CD8-positive, alpha-beta T cell (primary cell): ENCODE measurements at regions of chr16 and their contacts with region 1.

Region 1: GRCh38 chr16:3364774-3365427 is 9.2 kb downstream of the OR2C1 start:
- DNase-seq: peak; percentile 67 to 95 (median 82)
- ATAC-seq: peak; percentile 91
- H3K4me3 ChIP-seq: peak overlapping the region; percentile 46 to 62
- H3K4me3 Mint-ChIP-seq: peak overlapping the region; percentile 81
- H3K27ac ChIP-seq: peak overlapping the region; percentile 72 to 91
- H3K27ac Mint-ChIP-seq: peak overlapping the region; percentile 91
- H3K4me1 ChIP-seq: peaks cover 9% of the 10 kb centered on the region
- H3K4me1 Mint-ChIP-seq: peaks cover 11% of the 10 kb centered on the region
- H3K27me3 ChIP-seq: peaks cover 0 to 10% of the 10 kb centered on the region in 2 experiments
- H3K27me3 Mint-ChIP-seq: peaks cover 24% of the 10 kb centered on the region
- CTCF ChIP-seq: no peak

Region 2: DNA sequence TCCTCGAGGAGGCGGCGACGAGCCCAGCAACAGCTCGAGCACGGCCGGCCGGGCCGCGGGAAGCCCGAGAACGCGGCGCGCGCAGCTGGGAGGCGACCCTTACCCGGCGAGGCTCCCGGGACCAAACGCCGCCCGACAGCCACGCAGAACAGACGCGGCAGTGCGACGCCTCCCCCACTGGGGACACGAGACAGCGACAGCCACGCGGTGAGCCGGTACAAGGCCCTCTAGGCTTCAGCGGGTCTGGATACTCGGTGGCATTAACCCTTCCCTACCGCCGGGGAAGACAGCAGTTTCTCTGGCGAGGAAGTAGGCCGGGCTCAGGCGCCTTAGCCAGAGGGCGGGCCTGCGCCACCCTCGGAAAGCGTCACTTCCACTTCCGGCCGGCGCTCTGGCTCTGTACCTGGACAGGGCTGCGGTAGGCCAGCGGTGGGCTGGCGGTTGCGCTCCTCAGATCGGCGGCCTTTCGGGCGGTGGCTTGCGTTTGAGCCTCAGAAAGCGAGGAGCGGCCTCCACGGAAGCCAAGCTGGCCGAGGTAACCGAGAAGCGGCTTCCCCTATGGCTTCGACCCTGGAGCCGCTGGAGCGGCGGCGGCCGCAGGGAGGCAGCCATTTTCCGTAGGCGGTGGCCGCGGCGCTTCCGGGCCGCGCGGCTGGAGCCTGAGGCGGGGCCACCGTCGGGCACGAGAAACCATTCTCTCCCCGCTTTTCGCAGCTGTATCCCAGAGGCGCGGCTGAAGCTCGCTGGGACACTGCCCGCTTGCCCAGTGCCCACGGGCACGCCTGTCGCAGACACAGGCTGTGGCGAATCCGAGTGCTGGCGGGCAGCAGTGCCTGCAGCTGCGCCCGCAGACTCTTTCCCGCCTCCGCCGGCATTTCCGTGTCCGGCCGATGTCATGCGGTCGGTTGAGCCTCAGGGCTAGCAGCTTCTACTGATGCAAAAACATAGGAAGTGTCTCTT is 59.5 kb before region 1 on chr16 and contains the starts of genes TIGD7 and ZNF75A:
- CTCF ChIA-PET with region 1: no interaction called
- POLR2A ChIA-PET with region 1: no interaction called
- intact Hi-C with region 1: loop called in 1 of 2 experiments (anchors 2 kb)
- DNase-seq: peak; percentile 60 to 94 (median 83)
- ATAC-seq: peak; percentile 97
- H3K4me3 ChIP-seq: peak within 1 kb of the TSS; percentile 90 to 93
- H3K4me3 Mint-ChIP-seq: peak within 1 kb of the TSS; percentile 83
- H3K27ac ChIP-seq: peak within 1 kb of the TSS; percentile 86 to 91
- H3K27ac Mint-ChIP-seq: peak within 1 kb of the TSS; percentile 90
- H3K4me1 ChIP-seq: peaks cover 14% of the 10 kb centered on the region
- H3K4me1 Mint-ChIP-seq: peaks cover 30% of the 10 kb centered on the region
- H3K27me3 ChIP-seq: no peaks in the 10 kb centered on the region
- H3K27me3 Mint-ChIP-seq: no peaks in the 10 kb centered on the region
- CTCF ChIP-seq: no peak
- total RNA-seq, gene TIGD7: 4.1 to 4.2 TPM
- total RNA-seq, gene ZNF75A: 59.6 to 61.3 TPM

Region 3: DNA sequence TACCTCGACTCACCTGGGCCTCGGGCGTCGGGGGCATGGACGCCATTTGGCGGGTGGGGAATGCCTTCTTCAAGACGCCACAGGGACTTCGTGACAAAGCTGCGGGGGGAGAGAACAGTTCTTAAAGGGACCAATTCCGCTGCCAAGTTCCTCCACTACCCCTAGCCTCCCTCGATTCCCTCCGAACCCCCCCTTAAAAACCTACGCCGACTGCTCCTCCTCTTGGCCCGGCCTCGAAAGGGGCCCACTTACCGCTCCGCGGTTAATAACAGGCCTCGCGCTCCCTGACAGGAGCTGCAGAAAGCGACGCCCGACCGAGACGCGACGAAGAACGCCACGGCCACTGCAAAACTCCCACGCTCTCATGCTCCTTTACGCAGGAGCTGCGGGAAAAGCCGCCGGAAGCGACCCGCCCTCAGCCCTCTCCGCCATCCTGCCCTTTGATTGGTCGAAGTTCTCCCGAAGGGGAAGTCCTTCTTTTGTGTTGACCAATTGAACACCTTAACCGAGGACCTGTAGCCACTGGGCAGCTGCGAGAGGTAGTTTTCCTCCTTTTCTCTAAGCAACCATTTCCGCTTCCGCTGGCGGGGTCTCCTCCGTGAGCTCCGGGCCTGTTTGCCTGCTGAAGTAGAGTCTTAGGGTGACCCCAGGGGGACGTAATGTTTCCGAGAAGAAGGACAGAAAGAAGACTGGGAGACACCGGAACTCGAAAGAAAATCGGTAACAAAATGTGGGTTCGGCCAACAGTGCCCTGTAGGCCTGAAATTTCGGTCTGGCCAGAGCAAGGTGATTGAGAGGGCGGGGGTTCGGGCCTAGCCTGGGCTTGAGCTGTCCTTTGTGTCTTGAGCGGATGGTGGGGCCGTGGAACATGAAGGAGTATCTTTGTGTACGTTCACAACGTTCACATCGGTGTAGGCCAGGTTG is 78.5 kb after region 1 on chr16 and contains the starts of genes NAA60 and ZNF597:
- CTCF ChIA-PET with region 1: no interaction called
- POLR2A ChIA-PET with region 1: interaction called, 4 read pairs
- intact Hi-C with region 1: loop called (anchors 1 to 2 kb)
- DNase-seq: peak; percentile 41 to 92 (median 78)
- ATAC-seq: peak; percentile 89
- H3K4me3 ChIP-seq: peak within 1 kb of the TSS; percentile 51 to 75
- H3K4me3 Mint-ChIP-seq: peak within 1 kb of the TSS; percentile 94
- H3K27ac ChIP-seq: peak within 1 kb of the TSS; percentile 61 to 87
- H3K27ac Mint-ChIP-seq: peak within 1 kb of the TSS; percentile 96
- H3K4me1 ChIP-seq: peaks cover 13% of the 10 kb centered on the region
- H3K4me1 Mint-ChIP-seq: peaks cover 32% of the 10 kb centered on the region
- H3K27me3 ChIP-seq: no peaks in the 10 kb centered on the region
- H3K27me3 Mint-ChIP-seq: no peaks in the 10 kb centered on the region
- CTCF ChIP-seq: no peak
- total RNA-seq, gene NAA60: 45.4 to 48.0 TPM
- total RNA-seq, gene ZNF597: 4.5 to 4.6 TPM